BJ (cell line): ENCODE measurements at regions of chr9 and their contacts with region 1.

Region 1: GRCh38 chr9:35029852-35030251 is 40.3 kb downstream of the DNAJB5 start:
- DNase-seq: no peak
- H3K4me3 ChIP-seq: no peak overlapping the region
- H3K27me3 ChIP-seq: no peaks in the 10 kb centered on the region
- CTCF ChIP-seq: no peak

Region 2: DNA sequence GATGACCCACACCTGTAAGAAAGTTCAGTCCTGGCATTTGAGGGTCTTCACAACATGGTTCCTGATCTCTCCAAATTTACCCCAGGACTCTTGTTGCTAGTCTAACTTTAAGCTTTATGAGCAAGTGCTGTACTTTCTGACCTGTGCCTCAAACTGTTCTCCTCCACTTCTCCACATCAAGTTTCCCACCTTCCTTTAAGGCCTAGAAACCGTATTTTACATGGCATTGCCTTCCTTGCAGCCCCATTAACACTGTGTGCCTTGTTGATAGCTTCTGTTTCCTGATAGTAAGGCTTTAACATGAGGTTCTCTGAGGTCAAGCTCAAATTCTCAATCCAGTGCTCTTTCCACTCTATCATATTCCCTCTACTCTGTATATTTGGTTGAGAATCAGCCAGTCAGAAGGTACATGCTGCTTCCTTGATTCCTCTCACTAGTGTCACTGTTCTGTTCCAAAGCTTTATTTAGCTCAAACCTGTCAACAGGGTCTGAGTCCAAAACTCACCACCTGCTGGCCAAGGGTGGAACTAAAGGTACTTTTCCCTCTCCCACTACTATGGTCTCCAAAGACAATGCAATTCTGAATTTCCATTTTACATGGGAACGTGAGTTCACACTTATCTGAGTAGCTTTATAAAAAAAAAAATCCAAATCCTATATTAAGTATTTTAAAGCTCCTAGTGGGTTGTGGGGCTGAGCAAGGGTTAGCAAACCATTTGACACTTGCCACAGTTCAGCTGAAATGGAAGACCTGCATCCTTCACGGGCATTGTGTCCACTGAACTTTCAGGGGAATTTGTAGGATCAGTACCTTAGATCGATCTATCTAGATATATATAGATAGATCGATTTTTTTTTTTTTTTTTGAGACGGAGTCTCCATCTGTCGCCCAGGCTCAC is 21.5 kb after region 1 on chr9:
- CTCF ChIA-PET with region 1: interaction called, 21 read pairs
- POLR2A ChIA-PET with region 1: no interaction called
- DNase-seq: no peak
- H3K4me3 ChIP-seq: no peak overlapping the region
- H3K27me3 ChIP-seq: no peaks in the 10 kb centered on the region
- CTCF ChIP-seq: peak; percentile 69